Psoas muscle (tissue), 8 donors: ENCODE measurements at regions of chr6 and their contacts with region 1.

Region 1: GRCh38 chr6:37134606-37135191 is 35.3 kb upstream of the PIM1 start:
- DNase-seq: peak; percentile 64 to 76
- ATAC-seq: peak; percentile 66 to 75 (median 74)
- H3K4me3 ChIP-seq: no peak overlapping the region
- H3K27ac ChIP-seq: peak overlapping the region; percentile 98
- H3K4me1 ChIP-seq: peaks cover 59% of the 10 kb centered on the region
- H3K27me3 ChIP-seq: no peaks in the 10 kb centered on the region
- CTCF ChIP-seq: no peak

Region 2: DNA sequence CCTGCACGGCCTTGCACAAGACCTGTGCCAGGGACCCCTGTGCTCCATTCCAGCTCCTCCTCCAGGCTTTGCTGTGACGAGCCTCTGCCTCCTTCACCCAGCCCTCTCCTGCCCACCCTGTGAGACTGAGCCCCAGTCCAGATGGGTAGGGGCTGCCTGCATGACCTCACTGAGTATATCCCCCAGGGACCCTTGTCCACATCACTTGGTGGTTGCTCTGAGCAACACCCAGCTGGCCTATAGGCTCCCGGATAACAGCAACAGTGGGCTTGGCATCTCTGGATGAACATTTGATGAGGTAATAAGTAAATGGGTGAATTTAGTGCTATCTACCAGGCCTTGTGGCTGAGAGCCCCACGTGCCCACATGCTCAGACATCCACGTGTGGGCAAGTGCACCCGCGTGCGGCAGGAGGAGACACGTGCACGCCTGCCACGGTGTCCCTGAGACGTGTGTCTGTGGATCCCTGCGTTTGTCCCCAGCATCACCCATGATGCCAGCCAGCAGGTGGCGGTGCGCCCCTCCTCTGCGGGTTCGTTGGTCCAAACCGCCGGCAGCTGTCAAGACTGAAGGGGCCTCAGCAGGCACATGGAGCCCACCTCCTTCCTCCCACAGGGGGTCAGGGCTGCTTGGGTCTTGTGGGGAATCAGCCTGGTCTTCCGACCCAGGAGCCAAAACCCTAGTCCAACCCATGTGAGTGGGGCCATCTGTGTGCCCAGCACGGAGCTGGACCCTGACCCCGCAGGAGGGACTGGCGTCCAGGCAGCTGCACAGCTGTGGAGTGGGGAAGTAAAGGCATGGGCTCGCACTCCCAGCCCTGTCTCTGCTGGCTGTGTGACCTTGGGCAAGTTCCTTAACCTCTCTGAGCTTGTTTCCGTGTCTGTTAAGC is 83.3 kb before region 1 on chr6:
- intact Hi-C with region 1: loop called in 1 of 2 experiments (anchors 5 kb)
- DNase-seq: peak; percentile 92 to 95
- ATAC-seq: peak; percentile 90 to 97 (median 91)
- H3K4me3 ChIP-seq: no peak overlapping the region
- H3K27ac ChIP-seq: peak overlapping the region; percentile 51
- H3K4me1 ChIP-seq: peaks cover 11% of the 10 kb centered on the region
- H3K27me3 ChIP-seq: no peaks in the 10 kb centered on the region
- CTCF ChIP-seq: peak; percentile 93

Region 3: DNA sequence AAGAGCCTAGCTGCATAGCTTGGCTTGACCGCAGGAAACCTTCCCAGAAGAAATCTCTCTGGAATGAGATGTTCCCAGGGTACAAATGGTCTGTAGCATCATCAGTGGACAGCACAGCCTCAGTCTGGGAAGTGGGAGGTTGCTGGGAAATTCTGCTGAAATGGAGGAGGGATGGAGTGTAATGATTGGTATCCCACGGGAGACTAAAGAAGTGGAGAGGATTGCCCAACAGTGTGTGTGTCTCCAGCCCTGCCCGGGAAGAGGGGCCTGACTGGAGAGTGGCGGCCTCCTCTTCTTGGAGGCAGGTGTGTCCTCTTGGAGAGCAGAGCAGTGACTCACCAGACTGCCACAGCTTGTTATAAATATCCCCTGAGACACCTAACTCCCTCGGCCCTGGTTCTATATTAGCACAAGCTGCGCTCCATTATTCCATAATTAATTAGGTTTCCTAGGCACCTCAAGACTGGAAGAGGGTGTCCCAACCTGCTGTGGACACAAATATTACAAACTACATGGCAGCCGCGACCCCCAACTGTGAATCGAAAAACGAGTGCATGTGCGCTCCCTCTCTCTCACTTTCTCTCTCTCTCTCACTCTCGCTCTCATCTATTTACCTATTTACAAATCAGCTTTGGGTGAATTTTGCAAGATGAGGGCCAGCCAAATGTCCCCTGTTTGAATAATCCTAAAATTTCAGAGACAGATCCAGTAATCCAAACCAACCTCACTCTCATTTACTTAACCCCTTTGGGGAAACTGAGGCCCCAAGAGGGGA is 60.5 kb before region 1 on chr6:
- intact Hi-C with region 1: loop called in 1 of 2 experiments (anchors 1 kb)
- DNase-seq: peak; percentile 77 to 87
- ATAC-seq: peak; percentile 96 to 98 (median 96)
- H3K4me3 ChIP-seq: no peak overlapping the region
- H3K27ac ChIP-seq: peak overlapping the region; percentile 79
- H3K4me1 ChIP-seq: peaks cover 10% of the 10 kb centered on the region
- H3K27me3 ChIP-seq: no peaks in the 10 kb centered on the region
- CTCF ChIP-seq: no peak

Region 4: GRCh38 chr6:37092923-37093920 is 41.5 kb before region 1 on chr6:
- intact Hi-C with region 1: no loop called
- DNase-seq: peak; percentile 38 to 58
- ATAC-seq: peak in 1 of 4 donors; percentile 11
- H3K4me3 ChIP-seq: no peak overlapping the region
- H3K27ac ChIP-seq: no peak overlapping the region
- H3K4me1 ChIP-seq: peaks cover 7% of the 10 kb centered on the region
- H3K27me3 ChIP-seq: no peaks in the 10 kb centered on the region
- CTCF ChIP-seq: no peak